PC-3 (cell line): ENCODE measurements at regions of chr1 and their contacts with region 1.

Region 1: DNA sequence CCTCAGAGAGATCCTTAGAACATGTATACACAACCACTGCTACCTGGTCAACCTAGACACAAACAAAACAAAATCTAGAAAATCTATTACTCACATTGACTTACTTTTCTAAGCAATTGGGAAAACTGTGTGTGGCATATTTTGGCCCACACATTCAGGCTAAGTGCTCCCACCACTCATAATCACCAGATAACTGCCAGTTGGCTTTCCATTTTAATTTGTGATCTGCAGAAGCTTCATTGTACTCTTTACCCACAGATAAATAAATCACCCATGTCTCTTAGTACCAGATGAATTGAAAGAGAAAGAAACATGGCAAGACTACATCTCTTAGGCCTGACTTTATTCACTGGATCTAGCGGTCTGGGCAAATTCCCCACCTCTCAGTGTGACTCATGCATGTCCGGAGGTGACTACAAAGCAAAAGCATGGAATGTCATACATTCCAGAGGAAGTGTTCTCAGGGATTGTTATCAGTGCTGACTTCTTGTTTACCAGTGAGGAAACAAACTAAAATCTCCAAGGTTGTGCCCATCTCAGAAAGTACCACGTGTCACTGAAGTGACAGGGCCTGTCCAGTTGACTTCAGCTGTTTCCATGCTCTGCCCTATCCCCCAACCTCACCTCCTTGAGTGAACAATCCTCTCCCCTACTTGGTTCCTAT is 52.4 kb upstream of the BCL10 start:
- DNase-seq: peak; percentile 99
- ATAC-seq: peak; percentile 90
- H3K4me3 ChIP-seq: no peak overlapping the region
- H3K27ac ChIP-seq: peak overlapping the region; percentile 90
- H3K4me1 ChIP-seq: peaks cover 61% of the 10 kb centered on the region
- H3K27me3 ChIP-seq: no peaks in the 10 kb centered on the region
- CTCF ChIP-seq: no peak

Region 2: GRCh38 chr1:85313888-85314696 is 14.8 kb before region 1 on chr1:
- CTCF ChIA-PET with region 1: no interaction called
- POLR2A ChIA-PET with region 1: interaction called, 3 read pairs
- intact Hi-C with region 1: loop called (anchors 2 kb)
- DNase-seq: peak; percentile 96
- ATAC-seq: peak; percentile 97
- H3K4me3 ChIP-seq: no peak overlapping the region
- H3K27ac ChIP-seq: peak overlapping the region; percentile 56
- H3K4me1 ChIP-seq: peaks cover 43% of the 10 kb centered on the region
- H3K27me3 ChIP-seq: no peaks in the 10 kb centered on the region
- CTCF ChIP-seq: no peak

Region 3: DNA sequence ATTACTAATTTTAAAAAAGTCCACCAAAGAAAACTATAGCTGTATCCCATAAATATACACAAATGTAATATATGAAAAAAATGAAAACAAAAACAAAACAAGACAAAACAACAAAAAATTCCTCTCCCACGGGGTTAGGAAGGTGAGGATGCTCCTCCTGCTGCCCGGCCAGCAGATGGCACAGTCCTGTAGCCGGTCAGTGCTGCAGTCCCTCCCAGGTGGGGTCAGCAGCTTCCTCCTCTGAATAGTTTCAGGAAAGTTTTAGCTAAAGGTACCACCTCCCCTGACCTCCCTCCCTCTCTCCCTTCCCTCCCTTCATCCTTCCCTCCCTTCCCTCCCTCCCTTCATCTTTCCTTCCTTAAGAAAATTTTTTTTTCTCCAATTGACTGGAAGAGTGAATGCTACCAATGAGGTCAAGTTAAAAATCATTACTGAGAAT is 15.4 kb after region 1 on chr1:
- CTCF ChIA-PET with region 1: interaction called, 4 read pairs
- POLR2A ChIA-PET with region 1: interaction called, 4 read pairs
- intact Hi-C with region 1: loop called (anchors 1 kb)
- DNase-seq: peak; percentile 63
- ATAC-seq: peak; percentile 78
- H3K4me3 ChIP-seq: no peak overlapping the region
- H3K27ac ChIP-seq: peak overlapping the region; percentile 71
- H3K4me1 ChIP-seq: peaks cover 57% of the 10 kb centered on the region
- H3K27me3 ChIP-seq: no peaks in the 10 kb centered on the region
- CTCF ChIP-seq: peak; percentile 85

Region 4: DNA sequence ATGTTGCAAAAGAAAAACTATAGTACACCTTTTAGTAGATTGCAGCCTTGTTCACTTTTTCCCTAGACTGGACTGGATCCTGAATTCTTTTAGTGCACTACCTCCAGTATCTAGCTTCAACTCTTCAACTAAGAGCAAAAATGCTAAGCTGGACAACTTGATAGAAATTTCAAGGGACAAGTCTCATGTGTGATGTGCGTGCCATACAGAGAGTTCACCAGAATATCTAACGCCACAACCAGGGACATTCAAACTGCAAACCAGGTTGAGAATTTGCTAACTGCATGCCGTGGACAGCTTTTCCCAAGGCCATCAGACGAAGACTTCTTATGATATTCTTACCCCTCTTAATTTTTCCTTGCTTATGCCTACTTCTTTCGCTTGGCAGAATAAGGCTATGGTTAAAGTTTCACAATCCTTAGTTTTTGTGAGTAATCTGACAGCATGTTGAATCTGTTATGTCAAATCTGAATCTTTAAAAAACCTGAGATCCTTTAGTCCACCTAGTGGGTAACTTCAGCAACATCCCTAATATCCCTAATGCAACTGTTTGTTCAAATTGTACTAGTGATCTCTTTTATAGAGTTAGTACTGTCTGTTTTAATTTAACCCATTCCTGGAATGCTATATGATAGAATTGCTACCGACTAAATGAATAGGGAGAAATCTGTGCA is 69.7 kb after region 1 on chr1:
- CTCF ChIA-PET with region 1: no interaction called
- POLR2A ChIA-PET with region 1: no interaction called
- intact Hi-C with region 1: loop called (anchors 5 kb)
- DNase-seq: peak; percentile 72
- ATAC-seq: peak; percentile 81
- H3K4me3 ChIP-seq: no peak overlapping the region
- H3K27ac ChIP-seq: no peak overlapping the region
- H3K4me1 ChIP-seq: peaks cover 18% of the 10 kb centered on the region; the same call in 1 of the 2 replicates
- H3K27me3 ChIP-seq: no peaks in the 10 kb centered on the region
- CTCF ChIP-seq: peak; percentile 77